B cell (primary cell): ENCODE measurements at regions of chr22 and their contacts with region 1.

Region 1: GRCh38 chr22:35582861-35583670 is 34.1 kb downstream of the MB start:
- DNase-seq: peak; percentile 81
- ATAC-seq: peak; percentile 77
- H3K4me3 ChIP-seq: no peak overlapping the region
- H3K4me3 Mint-ChIP-seq: no peak overlapping the region
- H3K27ac ChIP-seq: no peak overlapping the region
- H3K27ac Mint-ChIP-seq: no peak overlapping the region
- H3K4me1 ChIP-seq: peaks cover 0 to 7% of the 10 kb centered on the region in 2 donors
- H3K4me1 Mint-ChIP-seq: no peaks in the 10 kb centered on the region
- H3K27me3 ChIP-seq: no peaks in the 10 kb centered on the region
- H3K27me3 Mint-ChIP-seq: no peaks in the 10 kb centered on the region
- CTCF ChIP-seq: peak; percentile 95

Region 2: GRCh38 chr22:35430897-35431322 is 152.2 kb before region 1 on chr22:
- CTCF ChIA-PET with region 1: interaction called, 39 read pairs
- POLR2A ChIA-PET with region 1: no interaction called
- intact Hi-C with region 1: loop called (anchors 2 kb)
- DNase-seq: peak; percentile 68
- ATAC-seq: peak; percentile 80
- H3K4me3 ChIP-seq: no peak overlapping the region
- H3K4me3 Mint-ChIP-seq: no peak overlapping the region
- H3K27ac ChIP-seq: no peak overlapping the region
- H3K27ac Mint-ChIP-seq: no peak overlapping the region
- H3K4me1 ChIP-seq: no peaks in the 10 kb centered on the region
- H3K4me1 Mint-ChIP-seq: peaks cover 6% of the 10 kb centered on the region
- H3K27me3 ChIP-seq: no peaks in the 10 kb centered on the region
- H3K27me3 Mint-ChIP-seq: no peaks in the 10 kb centered on the region
- CTCF ChIP-seq: peak; percentile 82

Region 3: GRCh38 chr22:35627264-35628041 is 44.4 kb after region 1 on chr22:
- CTCF ChIA-PET with region 1: no interaction called
- POLR2A ChIA-PET with region 1: no interaction called
- intact Hi-C with region 1: loop called (anchors 1 kb)
- DNase-seq: peak; percentile 32
- ATAC-seq: no peak
- H3K4me3 ChIP-seq: no peak overlapping the region
- H3K4me3 Mint-ChIP-seq: no peak overlapping the region
- H3K27ac ChIP-seq: no peak overlapping the region
- H3K27ac Mint-ChIP-seq: no peak overlapping the region
- H3K4me1 ChIP-seq: peaks cover 9 to 11% of the 10 kb centered on the region in 2 donors
- H3K4me1 Mint-ChIP-seq: peaks cover 13% of the 10 kb centered on the region
- H3K27me3 ChIP-seq: peaks cover 0 to 43% (median 24%) of the 10 kb centered on the region in 4 experiments
- H3K27me3 Mint-ChIP-seq: peaks cover 53% of the 10 kb centered on the region
- CTCF ChIP-seq: no peak

Region 4: GRCh38 chr22:35697142-35697541 is 114.1 kb after region 1 on chr22:
- CTCF ChIA-PET with region 1: no interaction called
- POLR2A ChIA-PET with region 1: no interaction called
- intact Hi-C with region 1: no loop called
- DNase-seq: no peak
- ATAC-seq: no peak
- H3K4me3 ChIP-seq: no peak overlapping the region
- H3K4me3 Mint-ChIP-seq: no peak overlapping the region
- H3K27ac ChIP-seq: no peak overlapping the region
- H3K27ac Mint-ChIP-seq: no peak overlapping the region
- H3K4me1 ChIP-seq: no peaks in the 10 kb centered on the region
- H3K4me1 Mint-ChIP-seq: no peaks in the 10 kb centered on the region
- H3K27me3 ChIP-seq: peaks cover 0 to 2% (median 0%) of the 10 kb centered on the region in 4 experiments
- H3K27me3 Mint-ChIP-seq: peaks cover 17% of the 10 kb centered on the region
- CTCF ChIP-seq: no peak